PC-3 (cell line): ENCODE measurements at regions of chr3 and their contacts with region 1.

Region 1: DNA sequence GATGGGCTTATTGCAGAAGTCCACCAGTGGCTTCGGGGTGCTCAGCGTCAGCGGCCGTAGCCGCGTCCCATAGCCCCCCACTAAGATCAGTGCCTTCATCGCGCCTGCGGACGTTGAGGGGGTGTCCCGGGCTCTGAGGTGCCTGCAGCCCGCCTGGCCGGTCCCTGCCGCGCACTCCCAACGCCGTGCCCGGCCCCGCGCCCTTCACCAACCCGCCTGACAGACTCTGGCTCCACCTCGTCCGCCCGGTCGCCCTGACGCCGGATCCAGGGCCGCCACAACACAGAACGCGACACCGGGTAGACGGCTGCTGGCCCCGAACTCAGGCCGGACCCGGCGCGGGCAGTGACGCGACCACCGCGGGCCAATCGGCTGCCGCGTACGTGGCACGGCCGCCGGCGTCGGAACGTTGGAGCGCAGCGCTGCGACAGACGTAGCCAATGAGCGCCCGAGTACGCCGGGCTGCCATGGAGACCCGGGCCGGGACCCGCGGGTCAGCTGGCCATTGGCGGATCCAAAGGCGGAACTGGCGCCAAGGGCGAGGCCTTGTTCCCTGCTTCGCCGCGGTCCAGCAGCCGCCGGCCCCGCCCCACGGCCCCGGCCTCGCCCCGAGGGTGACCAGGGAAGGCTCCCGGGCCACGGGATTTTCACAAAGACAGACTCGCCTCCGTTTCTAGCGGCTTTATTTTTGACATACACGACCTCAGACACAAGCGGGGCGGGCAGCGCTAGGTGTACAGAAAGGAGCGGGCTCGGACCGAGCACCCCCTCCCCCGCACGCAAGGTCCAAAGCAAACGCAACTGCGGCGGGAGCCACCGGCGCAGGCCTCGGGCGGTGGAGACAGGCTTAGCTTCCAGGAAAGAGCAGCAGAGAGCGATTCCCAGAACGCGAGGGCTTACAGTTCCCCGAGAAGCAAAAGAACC is at the start of gene GMPPB:
- DNase-seq: peak; percentile 99
- ATAC-seq: peak; percentile 78
- H3K4me3 ChIP-seq: peak within 1 kb of the TSS; percentile 98
- H3K27ac ChIP-seq: peak within 1 kb of the TSS; percentile 79
- H3K4me1 ChIP-seq: peaks cover 20% of the 10 kb centered on the region
- H3K27me3 ChIP-seq: no peaks in the 10 kb centered on the region
- CTCF ChIP-seq: no peak
- total RNA-seq, gene GMPPB: 69.5 and 83.9 TPM in 2 replicates

Region 2: GRCh38 chr3:49747792-49748480 is 24.0 kb after region 1 on chr3:
- CTCF ChIA-PET with region 1: no interaction called
- POLR2A ChIA-PET with region 1: no interaction called
- intact Hi-C with region 1: no loop called
- DNase-seq: peak; percentile 17
- ATAC-seq: 0 out of 2 replicates have a peak, but pooled peaks have one; percentile 15
- H3K4me3 ChIP-seq: no peak overlapping the region
- H3K27ac ChIP-seq: no peak overlapping the region
- H3K4me1 ChIP-seq: peaks cover 4% of the 10 kb centered on the region
- H3K27me3 ChIP-seq: no peaks in the 10 kb centered on the region
- CTCF ChIP-seq: no peak

Region 3: DNA sequence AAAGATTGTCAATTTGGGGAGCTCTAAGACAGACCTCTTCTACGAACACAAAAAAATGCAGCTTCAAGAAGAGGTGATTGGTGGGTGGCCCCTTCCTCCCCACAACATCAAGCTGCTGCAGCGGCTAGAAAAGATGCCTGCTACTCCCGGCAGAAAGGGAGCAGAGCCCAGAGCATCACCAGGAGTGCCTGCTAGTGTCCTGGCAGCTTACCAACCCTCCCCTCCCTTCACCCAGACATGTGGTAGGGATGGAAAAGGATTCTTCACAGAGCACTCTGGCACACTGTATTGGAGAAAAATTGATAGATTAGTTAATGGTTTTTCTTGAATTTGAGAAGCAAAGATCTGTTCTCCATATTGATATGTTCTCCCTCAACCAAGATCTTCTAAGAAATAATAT is 51.6 kb after region 1 on chr3:
- CTCF ChIA-PET with region 1: interaction called, 14 read pairs
- POLR2A ChIA-PET with region 1: no interaction called
- intact Hi-C with region 1: no loop called
- DNase-seq: no peak
- ATAC-seq: no peak
- H3K4me3 ChIP-seq: no peak overlapping the region
- H3K27ac ChIP-seq: no peak overlapping the region
- H3K4me1 ChIP-seq: peaks cover 23% of the 10 kb centered on the region
- H3K27me3 ChIP-seq: no peaks in the 10 kb centered on the region
- CTCF ChIP-seq: no peak

Region 4: GRCh38 chr3:49786241-49786958 is 62.5 kb after region 1 on chr3 and contains the start of gene IP6K1:
- CTCF ChIA-PET with region 1: no interaction called
- POLR2A ChIA-PET with region 1: no interaction called
- intact Hi-C with region 1: loop called (anchors 1 kb)
- DNase-seq: peak; percentile 100
- ATAC-seq: peak; percentile 99
- H3K4me3 ChIP-seq: peak within 1 kb of the TSS; percentile 87
- H3K27ac ChIP-seq: peak within 1 kb of the TSS; percentile 50
- H3K4me1 ChIP-seq: peaks cover 14% of the 10 kb centered on the region
- H3K27me3 ChIP-seq: no peaks in the 10 kb centered on the region
- CTCF ChIP-seq: no peak
- total RNA-seq, gene IP6K1: 50.3 and 51.0 TPM in 2 replicates

Region 5: DNA sequence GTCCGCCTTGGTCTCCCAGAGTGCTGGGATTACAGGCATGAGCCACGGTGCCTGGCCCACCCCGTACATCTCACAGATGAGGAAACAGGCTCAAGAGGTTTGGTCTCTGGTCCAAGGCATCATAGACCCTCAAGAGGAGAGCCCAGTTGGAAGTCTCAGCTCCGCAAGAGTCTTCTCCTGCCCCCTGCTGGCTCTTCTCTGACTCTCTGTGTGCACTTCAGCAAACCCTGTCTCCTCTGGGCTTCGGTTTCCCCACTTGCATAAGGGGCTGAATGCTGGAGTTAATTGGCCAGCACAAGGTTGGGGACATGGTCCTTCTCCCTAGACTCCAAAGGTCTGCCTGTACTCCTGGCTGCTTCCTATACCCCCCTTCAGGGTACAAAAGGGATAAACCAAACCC is 175.9 kb after region 1 on chr3:
- CTCF ChIA-PET with region 1: no interaction called
- POLR2A ChIA-PET with region 1: no interaction called
- intact Hi-C with region 1: loop called (anchors 1 kb)
- DNase-seq: peak; percentile 23
- ATAC-seq: no peak
- H3K4me3 ChIP-seq: peak overlapping the region; percentile 63
- H3K27ac ChIP-seq: peak overlapping the region; percentile 99
- H3K4me1 ChIP-seq: peaks cover 59% of the 10 kb centered on the region
- H3K27me3 ChIP-seq: no peaks in the 10 kb centered on the region
- CTCF ChIP-seq: peak; percentile 49